ENCODE measurements at regions of chr14 and their contacts with region 1.

Region 1: GRCh38 chr14:75906676-75907280 is 75.0 kb downstream of the TGFB3 start:
- DNase-seq: peak; percentile 93
- H3K4me3 ChIP-seq: no peak overlapping the region
- H3K27ac ChIP-seq: peak overlapping the region in 3 of 4 donors; percentile 3 to 13 (median 4)
- H3K4me1 ChIP-seq: peaks cover 8 to 17% (median 11%) of the 10 kb centered on the region in 4 donors
- H3K27me3 ChIP-seq: no peaks in the 10 kb centered on the region
- CTCF ChIP-seq: peak; percentile 81 to 90 (median 86)
- EP300 ChIP-seq: no peak
- POLR2A ChIP-seq: no peak

Region 2: DNA sequence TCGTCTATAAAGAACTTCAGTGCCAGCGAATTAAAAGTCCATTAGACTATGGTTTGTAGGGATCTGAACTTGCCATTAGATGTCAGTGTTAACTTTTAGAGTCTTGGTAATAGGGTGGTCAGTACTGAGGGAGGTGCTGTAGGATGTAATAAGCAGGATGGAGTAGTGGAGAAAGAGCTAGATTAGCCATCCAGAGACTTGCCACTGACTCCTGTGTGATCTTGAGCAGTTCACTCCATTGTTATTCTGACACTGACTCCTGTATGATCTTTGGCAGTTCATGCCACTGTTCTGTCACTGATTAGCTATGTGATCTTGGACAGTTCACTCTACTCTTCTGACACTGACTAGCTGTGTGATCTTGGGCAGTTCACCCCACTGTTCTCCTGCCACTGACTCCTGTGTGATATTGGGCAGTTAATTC is 112.2 kb before region 1 on chr14:
- intact Hi-C with region 1: loop called (anchors 10 kb)
- DNase-seq: no peak
- H3K4me3 ChIP-seq: no peak overlapping the region
- H3K27ac ChIP-seq: peak overlapping the region in 1 of 4 donors; percentile 33
- H3K4me1 ChIP-seq: peaks cover 0 to 12% (median 5%) of the 10 kb centered on the region in 4 donors
- H3K27me3 ChIP-seq: no peaks in the 10 kb centered on the region
- CTCF ChIP-seq: peak; percentile 51 to 62 (median 53)
- EP300 ChIP-seq: no peak
- POLR2A ChIP-seq: no peak

Region 3: DNA sequence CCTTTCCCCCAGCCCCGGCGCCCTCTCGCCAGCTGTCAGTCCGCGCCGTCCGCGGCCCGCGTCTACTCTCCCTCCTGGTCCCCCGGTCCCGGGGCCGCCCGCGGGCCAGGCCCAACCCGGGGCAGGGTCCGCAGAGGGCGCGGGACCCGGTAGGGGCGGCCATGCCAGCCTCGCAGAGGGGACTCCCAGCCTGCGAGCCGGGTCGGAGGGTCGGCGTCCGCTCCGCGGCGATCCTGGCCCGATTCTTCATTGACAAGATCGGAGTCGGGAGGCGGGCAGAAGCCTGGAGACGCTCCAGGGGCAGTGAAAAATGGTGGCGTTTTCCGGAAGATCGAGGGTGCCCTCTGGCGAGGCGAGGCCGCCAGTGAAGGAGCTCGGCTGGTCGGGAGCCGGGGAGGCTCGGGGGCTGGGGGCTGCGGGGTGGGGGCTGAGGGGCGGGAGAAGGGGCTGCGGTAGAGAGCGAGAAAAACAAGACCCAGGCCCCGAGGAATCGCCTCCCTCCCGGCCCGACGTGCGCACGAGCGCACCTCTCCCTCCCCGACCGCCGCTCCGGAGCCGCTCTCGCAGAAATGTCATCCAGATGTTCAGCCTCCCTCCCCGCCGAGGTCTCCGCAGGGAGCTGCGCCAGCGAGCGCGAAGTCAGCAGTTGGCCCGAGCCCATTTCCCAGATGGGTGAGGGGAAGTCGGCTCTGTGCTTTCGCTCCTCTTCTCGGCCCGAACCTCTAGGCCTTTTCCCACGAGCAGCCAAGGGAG is 75.7 kb after region 1 on chr14:
- intact Hi-C with region 1: loop called (anchors 2 kb)
- DNase-seq: peak; percentile 98
- H3K4me3 ChIP-seq: peak overlapping the region; percentile 75 to 92 (median 80)
- H3K27ac ChIP-seq: peak overlapping the region; percentile 96 to 99 (median 98)
- H3K4me1 ChIP-seq: peaks cover 45 to 74% (median 71%) of the 10 kb centered on the region in 4 donors
- H3K27me3 ChIP-seq: no peaks in the 10 kb centered on the region
- CTCF ChIP-seq: peak; percentile 51 to 85 (median 80)
- EP300 ChIP-seq: no peak
- POLR2A ChIP-seq: no peak

Region 4: GRCh38 chr14:76133083-76133498 is 226.3 kb after region 1 on chr14:
- intact Hi-C with region 1: no loop called
- DNase-seq: no peak
- H3K4me3 ChIP-seq: no peak overlapping the region
- H3K27ac ChIP-seq: no peak overlapping the region
- H3K4me1 ChIP-seq: peaks cover 0 to 8% (median under 1%) of the 10 kb centered on the region in 4 donors
- H3K27me3 ChIP-seq: peaks cover 0 to 78% (median 4%) of the 10 kb centered on the region in 4 donors
- CTCF ChIP-seq: no peak
- EP300 ChIP-seq: no peak
- POLR2A ChIP-seq: no peak

Measured in esophagus muscularis mucosa (tissue), 4 donors.